ENCODE measurements at regions of chr14 and their contacts with region 1.

Region 1: DNA sequence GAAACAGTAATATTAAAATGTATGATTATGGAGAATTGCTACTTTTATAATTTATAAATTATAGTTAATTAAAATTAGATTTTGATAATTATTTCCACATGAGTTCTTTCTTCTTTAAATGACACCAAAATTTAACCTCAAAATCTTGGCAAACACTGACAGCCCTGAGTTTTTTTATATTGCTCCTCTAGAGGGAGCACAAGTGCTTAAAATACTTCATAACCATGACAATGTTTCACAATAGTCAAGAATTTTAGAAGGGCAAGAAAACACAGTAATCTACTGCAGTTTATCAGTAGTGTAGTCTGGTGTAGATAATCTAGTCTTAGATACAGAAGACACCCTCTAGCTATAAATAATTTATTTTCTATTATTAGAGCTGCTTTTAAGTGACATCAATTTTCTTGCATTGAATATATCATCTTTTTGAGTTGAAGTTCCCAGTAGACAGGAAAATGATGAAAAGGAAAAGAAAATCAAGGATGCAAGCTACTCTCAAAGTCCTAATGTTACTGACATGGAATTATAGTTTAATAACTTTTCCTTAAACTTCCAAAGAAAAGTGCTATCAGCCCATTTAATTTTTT is 14.3 kb upstream of the PTGER2 start:
- DNase-seq: peak in 2 of 3 donors; percentile 73 to 78
- H3K4me3 ChIP-seq: no peak overlapping the region
- H3K27ac ChIP-seq: no peak overlapping the region
- H3K4me1 ChIP-seq: peaks cover 0 to 4% (median 0%) of the 10 kb centered on the region in 4 experiments
- H3K27me3 ChIP-seq: no peaks in the 10 kb centered on the region

Region 2: GRCh38 chr14:52286661-52287649 is 12.8 kb before region 1 on chr14:
- CTCF ChIA-PET with region 1: interaction called, 14 read pairs
- POLR2A ChIA-PET with region 1: no interaction called
- DNase-seq: peak in 2 of 3 donors; percentile 57 to 58
- H3K4me3 ChIP-seq: no peak overlapping the region
- H3K27ac ChIP-seq: no peak overlapping the region
- H3K4me1 ChIP-seq: peaks cover 5 to 21% (median 9%) of the 10 kb centered on the region in 4 experiments
- H3K27me3 ChIP-seq: no peaks in the 10 kb centered on the region

Region 3: DNA sequence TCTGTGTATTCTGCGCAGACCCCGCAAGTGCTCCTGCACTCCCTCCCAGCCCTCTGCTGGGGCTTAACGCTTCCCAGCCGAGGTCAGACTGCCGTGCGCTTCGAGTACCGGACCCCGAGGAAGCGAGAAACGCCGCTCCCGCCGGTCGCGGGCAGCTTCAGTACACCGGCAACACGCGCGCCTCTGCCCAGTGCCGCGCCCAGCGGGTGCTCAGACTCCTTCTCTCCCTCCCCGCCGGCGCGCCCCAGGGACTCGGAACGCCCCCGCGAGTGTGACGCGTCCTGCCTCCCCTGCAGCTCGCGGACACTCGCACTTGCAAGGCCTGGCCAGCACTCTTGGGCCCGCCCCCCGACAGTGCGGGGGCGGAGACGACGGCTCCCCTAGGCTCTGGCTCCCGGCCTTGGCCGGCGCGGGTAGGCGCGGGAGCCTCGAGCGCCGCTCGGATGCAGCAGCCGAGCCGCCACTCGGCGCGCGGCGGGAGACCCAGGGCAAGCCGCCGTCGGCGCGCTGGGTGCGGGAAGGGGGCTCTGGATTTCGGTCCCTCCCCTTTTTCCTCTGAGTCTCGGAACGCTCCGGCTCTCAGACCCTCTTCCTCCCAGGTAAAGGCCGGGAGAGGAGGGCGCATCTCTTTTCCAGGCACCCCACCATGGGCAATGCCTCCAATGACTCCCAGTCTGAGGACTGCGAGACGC is 14.3 kb after region 1 on chr14 and contains the start of gene PTGER2:
- CTCF ChIA-PET with region 1: interaction called, 34 read pairs
- POLR2A ChIA-PET with region 1: no interaction called
- DNase-seq: peak; percentile 74 to 95 (median 90)
- H3K4me3 ChIP-seq: peak within 1 kb of the TSS; percentile 54 to 96 (median 90)
- H3K27ac ChIP-seq: peak within 1 kb of the TSS; percentile 77 to 88
- H3K4me1 ChIP-seq: peaks cover 53 to 94% (median 88%) of the 10 kb centered on the region in 4 experiments
- H3K27me3 ChIP-seq: no peaks in the 10 kb centered on the region

Region 4: GRCh38 chr14:52402812-52403526 is 103.2 kb after region 1 on chr14:
- CTCF ChIA-PET with region 1: interaction called, 19 read pairs
- POLR2A ChIA-PET with region 1: no interaction called
- DNase-seq: peak; percentile 64 to 94 (median 93)
- H3K4me3 ChIP-seq: no peak overlapping the region
- H3K27ac ChIP-seq: no peak overlapping the region
- H3K4me1 ChIP-seq: peaks cover 3 to 24% (median 16%) of the 10 kb centered on the region in 4 experiments
- H3K27me3 ChIP-seq: peaks cover 0 to 22% (median 0%) of the 10 kb centered on the region in 5 experiments